ENCODE measurements at regions of chr13 and their contacts with region 1.

Region 1: GRCh38 chr13:99929866-99930265 is 41.7 kb downstream of the ZIC5 start:
- DNase-seq: no peak
- ATAC-seq: no peak
- H3K4me3 ChIP-seq: no peak overlapping the region
- H3K4me3 Mint-ChIP-seq: no peak overlapping the region
- H3K27ac ChIP-seq: no peak overlapping the region
- H3K27ac Mint-ChIP-seq: no peak overlapping the region
- H3K4me1 ChIP-seq: no peaks in the 10 kb centered on the region
- H3K4me1 Mint-ChIP-seq: peaks cover 0 to 5% (median 0%) of the 10 kb centered on the region in 3 donors
- H3K27me3 ChIP-seq: peaks cover 0 to 34% of the 10 kb centered on the region in 2 experiments
- H3K27me3 Mint-ChIP-seq: peaks cover 27% of the 10 kb centered on the region in 2 donors

Region 2: GRCh38 chr13:99905224-99905623 is 24.6 kb before region 1 on chr13:
- CTCF ChIA-PET with region 1: no interaction called
- POLR2A ChIA-PET with region 1: interaction called in 1 of 2 experiments, 16 read pairs
- DNase-seq: no peak
- ATAC-seq: no peak
- H3K4me3 ChIP-seq: no peak overlapping the region
- H3K4me3 Mint-ChIP-seq: no peak overlapping the region
- H3K27ac ChIP-seq: no peak overlapping the region
- H3K27ac Mint-ChIP-seq: no peak overlapping the region
- H3K4me1 ChIP-seq: peaks cover 0 to 3% of the 10 kb centered on the region in 2 experiments
- H3K4me1 Mint-ChIP-seq: peaks cover 0 to 3% (median 3%) of the 10 kb centered on the region in 3 donors
- H3K27me3 ChIP-seq: peaks cover 6 to 25% of the 10 kb centered on the region in 2 experiments
- H3K27me3 Mint-ChIP-seq: peaks cover 24 to 39% of the 10 kb centered on the region in 2 donors

Region 3: DNA sequence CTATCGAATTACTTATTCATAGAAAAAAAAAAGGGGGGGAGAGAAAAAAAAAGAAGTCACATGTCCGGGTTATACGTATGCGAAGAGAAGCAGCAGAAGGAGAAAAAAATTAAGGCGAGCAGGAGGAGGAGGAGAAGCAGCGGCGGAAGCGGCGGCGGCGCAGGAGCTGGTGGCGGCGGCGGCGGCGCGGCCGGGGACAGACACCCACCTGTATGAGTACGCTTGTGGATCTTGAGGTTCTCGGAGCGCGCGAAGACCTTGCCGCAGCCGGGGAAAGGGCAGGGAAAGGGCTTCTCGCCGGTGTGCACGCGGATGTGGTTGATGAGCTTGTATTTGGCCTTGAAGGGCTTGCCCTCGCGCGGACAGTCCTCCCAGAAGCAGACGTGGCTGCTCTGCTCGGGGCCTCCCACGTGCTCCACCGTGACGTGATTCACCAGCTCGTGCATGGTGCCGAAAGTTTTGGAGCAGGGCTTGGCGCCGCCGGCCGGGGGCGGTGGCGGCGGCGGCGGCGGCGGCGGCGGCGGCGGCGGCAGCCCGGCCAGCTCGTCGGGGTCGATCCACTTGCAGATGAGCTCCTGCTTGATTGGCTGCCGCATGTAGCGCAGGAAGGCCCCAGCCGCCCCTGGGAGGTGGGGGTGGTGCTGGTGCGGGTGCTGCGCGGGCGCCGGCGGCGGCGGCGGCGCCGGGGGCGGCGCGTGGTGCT is 40.2 kb after region 1 on chr13:
- CTCF ChIA-PET with region 1: no interaction called
- POLR2A ChIA-PET with region 1: no interaction called
- DNase-seq: peak in 3 of 35 experiments; percentile 29 to 60 (median 38)
- ATAC-seq: peak; percentile 41 to 65 (median 52)
- H3K4me3 ChIP-seq: peak overlapping the region; percentile 34 to 69
- H3K4me3 Mint-ChIP-seq: peak overlapping the region; percentile 66 to 78 (median 71)
- H3K27ac ChIP-seq: no peak overlapping the region
- H3K27ac Mint-ChIP-seq: peak overlapping the region in 1 of 2 donors; percentile 72
- H3K4me1 ChIP-seq: peaks cover 0 to 34% of the 10 kb centered on the region in 2 experiments
- H3K4me1 Mint-ChIP-seq: peaks cover 21 to 25% (median 24%) of the 10 kb centered on the region in 3 donors
- H3K27me3 ChIP-seq: peaks cover 29 to 73% of the 10 kb centered on the region in 2 experiments
- H3K27me3 Mint-ChIP-seq: peaks cover 63 to 73% of the 10 kb centered on the region in 2 donors

Region 4: DNA sequence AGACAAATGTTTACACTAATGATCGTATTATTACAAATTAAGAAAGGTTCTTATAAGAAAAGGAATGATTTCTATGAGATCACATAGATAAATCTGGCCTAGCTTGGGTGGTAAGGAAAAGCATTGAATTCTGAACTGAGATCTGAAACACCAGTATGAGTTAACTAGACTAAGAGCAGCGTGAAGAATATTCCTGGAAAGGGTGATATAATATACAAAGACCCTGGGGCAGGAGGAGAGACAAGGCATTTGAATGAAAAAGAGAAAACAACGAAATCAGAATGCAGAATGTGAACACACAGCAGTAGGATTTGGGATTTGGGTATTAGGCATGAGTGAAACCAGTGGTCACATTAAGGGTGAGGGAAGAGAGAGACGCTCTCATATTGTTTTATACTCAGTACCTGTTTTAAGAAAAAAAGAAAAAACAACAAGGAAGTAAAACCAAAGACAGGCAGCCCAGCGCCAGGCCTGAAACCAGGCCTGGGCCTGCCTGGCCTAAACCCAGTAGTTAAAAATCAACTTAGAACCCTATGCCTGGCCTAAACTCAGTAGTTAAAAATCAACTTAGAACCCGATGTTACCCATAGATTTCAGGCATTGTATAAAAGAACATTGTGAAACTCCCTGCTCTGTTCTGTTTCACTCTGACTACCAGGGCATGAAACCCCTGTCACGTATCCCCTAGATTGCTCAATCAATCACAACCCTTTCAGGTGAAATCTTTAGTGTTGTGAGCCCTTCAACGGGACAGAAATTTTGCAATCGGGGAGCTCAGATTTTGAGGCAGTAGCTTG is 1809.7 kb after region 1 on chr13:
- CTCF ChIA-PET with region 1: no interaction called
- POLR2A ChIA-PET with region 1: no interaction called
- DNase-seq: no peak
- ATAC-seq: no peak
- H3K4me3 ChIP-seq: no peak overlapping the region
- H3K4me3 Mint-ChIP-seq: no peak overlapping the region
- H3K27ac ChIP-seq: no peak overlapping the region
- H3K27ac Mint-ChIP-seq: no peak overlapping the region
- H3K4me1 ChIP-seq: no peaks in the 10 kb centered on the region
- H3K4me1 Mint-ChIP-seq: no peaks in the 10 kb centered on the region
- H3K27me3 ChIP-seq: no peaks in the 10 kb centered on the region
- H3K27me3 Mint-ChIP-seq: peaks cover 0 to 10% of the 10 kb centered on the region in 2 donors